Activated CD4-positive, alpha-beta memory T cell treated with anti-CD3 and anti-CD28 coated beads, Interleukin-2, amount 10 ng/mL, durations not matched to agents 7 days and 5 days (primary cell): ENCODE measurements at regions of chr9 and their contacts with region 1.

Region 1: GRCh38 chr9:69919461-69920061 is 98.9 kb downstream of the CFAP95 start:
- DNase-seq: no peak
- H3K4me3 Mint-ChIP-seq: no peak overlapping the region
- H3K27ac Mint-ChIP-seq: no peak overlapping the region
- H3K4me1 Mint-ChIP-seq: no peaks in the 10 kb centered on the region
- H3K27me3 Mint-ChIP-seq: peaks cover 19% of the 10 kb centered on the region

Region 2: GRCh38 chr9:69421908-69422801 is 497.4 kb before region 1 on chr9:
- CTCF ChIA-PET with region 1: interaction called, 13 read pairs
- POLR2A ChIA-PET with region 1: no interaction called
- DNase-seq: peak; percentile 50
- H3K4me3 Mint-ChIP-seq: no peak overlapping the region
- H3K27ac Mint-ChIP-seq: no peak overlapping the region
- H3K4me1 Mint-ChIP-seq: no peaks in the 10 kb centered on the region
- H3K27me3 Mint-ChIP-seq: peaks cover 4% of the 10 kb centered on the region

Region 3: GRCh38 chr9:69672596-69673310 is 246.8 kb before region 1 on chr9:
- CTCF ChIA-PET with region 1: interaction called, 21 read pairs
- POLR2A ChIA-PET with region 1: no interaction called
- DNase-seq: peak; percentile 73
- H3K4me3 Mint-ChIP-seq: peak overlapping the region; percentile 72
- H3K27ac Mint-ChIP-seq: no peak overlapping the region
- H3K4me1 Mint-ChIP-seq: peaks cover 17% of the 10 kb centered on the region
- H3K27me3 Mint-ChIP-seq: peaks cover 31% of the 10 kb centered on the region